Common myeloid progenitor, CD34-positive (primary cell): ENCODE measurements at regions of chr20 and their contacts with region 1.

Region 1: GRCh38 chr20:45322952-45323383 is 14.9 kb upstream of the MATN4 start:
- DNase-seq: peak; percentile 77 to 90 (median 89)
- H3K4me3 ChIP-seq: no peak overlapping the region
- H3K27ac ChIP-seq: no peak overlapping the region
- H3K4me1 ChIP-seq: peaks cover 2 to 29% (median 16%) of the 10 kb centered on the region in 4 experiments
- H3K27me3 ChIP-seq: peaks cover 0 to 2% (median 0%) of the 10 kb centered on the region in 5 experiments

Region 2: DNA sequence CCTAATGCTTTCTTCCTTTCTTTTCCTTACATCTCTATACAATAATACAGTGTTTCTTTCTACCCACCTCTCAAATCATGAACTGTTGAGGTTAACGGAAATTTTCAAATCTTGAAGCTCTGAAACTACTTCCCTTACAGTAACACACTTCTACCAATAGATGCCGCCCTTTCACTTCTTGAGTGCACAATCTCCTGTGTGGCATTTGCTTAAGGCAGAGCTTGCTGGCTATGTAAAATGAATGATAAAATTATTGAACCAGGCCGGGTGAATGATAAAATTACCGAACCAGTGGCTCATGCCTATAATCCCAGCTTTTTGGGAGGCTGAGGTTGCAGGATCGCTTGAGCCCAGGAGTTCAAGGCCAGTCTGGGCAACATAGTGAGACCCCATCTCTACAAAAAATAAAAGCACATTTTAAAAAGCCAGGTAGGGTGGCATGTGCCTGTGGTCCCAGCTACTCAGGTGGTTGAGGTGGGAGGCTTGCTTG is 278.8 kb before region 1 on chr20:
- CTCF ChIA-PET with region 1: interaction called, 10 read pairs
- POLR2A ChIA-PET with region 1: no interaction called
- DNase-seq: peak; percentile 74 to 86 (median 85)
- H3K4me3 ChIP-seq: no peak overlapping the region
- H3K27ac ChIP-seq: no peak overlapping the region
- H3K4me1 ChIP-seq: peaks cover 0 to 15% (median 7%) of the 10 kb centered on the region in 4 experiments
- H3K27me3 ChIP-seq: no peaks in the 10 kb centered on the region

Region 3: DNA sequence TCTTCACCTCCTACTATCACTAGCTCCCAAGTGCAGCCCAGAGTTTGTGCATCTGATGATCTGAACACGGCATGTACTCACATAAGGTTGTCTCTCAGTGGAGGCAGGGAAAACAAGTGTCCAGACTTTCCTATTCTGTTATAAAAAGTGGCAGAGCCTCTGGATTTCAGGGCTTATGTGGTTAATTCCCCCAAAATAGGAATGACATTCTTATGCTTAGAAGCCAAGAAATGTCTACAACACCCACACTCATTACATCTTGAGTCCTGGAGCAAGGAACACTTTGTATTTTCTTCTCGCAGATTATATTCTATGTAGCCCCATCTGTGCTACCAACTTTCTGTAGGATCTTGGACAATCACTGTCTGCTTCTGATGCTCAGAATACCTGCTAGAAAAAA is 129.6 kb before region 1 on chr20:
- CTCF ChIA-PET with region 1: no interaction called
- POLR2A ChIA-PET with region 1: no interaction called
- DNase-seq: no peak
- H3K4me3 ChIP-seq: no peak overlapping the region
- H3K27ac ChIP-seq: no peak overlapping the region
- H3K4me1 ChIP-seq: no peaks in the 10 kb centered on the region
- H3K27me3 ChIP-seq: peaks cover 0 to 11% (median 2%) of the 10 kb centered on the region in 5 experiments

Region 4: DNA sequence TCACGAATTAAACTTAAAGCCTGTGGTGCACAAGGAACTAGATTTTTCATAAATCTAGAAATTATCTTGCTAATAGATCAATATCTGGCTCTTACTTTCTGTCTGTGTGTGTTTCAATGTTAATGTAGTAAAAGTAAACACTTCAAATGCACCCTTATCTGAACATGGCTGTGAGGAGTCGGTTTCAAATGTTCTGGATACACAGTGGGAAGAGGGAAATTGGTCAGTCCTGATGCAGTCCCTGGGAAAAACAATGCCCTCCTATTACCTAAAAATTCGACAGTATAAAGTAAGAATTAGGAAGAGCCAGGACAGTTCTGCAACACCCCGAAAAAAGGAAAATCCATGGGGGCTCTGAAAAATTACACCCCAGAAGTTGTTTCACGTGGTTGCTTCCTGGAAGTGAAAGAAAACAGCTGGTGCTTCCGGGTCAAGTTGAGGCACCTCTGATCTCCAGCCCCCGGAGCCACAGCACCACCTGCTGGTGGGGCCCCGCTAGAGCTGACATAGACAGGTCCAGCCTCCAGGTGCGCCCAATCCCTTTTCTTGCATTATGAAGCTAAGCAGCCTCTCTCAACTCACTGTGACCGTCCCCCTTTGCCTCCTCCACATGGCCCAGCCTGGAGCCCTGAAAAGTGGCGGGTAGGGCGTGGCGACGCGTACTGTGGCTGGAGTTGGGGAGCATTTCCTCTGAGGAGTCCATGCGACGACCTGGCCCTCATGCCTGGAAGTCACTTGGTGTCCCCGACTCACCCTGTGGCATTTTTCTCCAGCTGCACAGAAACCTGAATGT is 93.5 kb before region 1 on chr20:
- CTCF ChIA-PET with region 1: no interaction called
- POLR2A ChIA-PET with region 1: no interaction called
- DNase-seq: peak; percentile 14 to 37 (median 27)
- H3K4me3 ChIP-seq: no peak overlapping the region
- H3K27ac ChIP-seq: no peak overlapping the region
- H3K4me1 ChIP-seq: no peaks in the 10 kb centered on the region
- H3K27me3 ChIP-seq: peaks cover 4 to 27% (median 14%) of the 10 kb centered on the region in 5 experiments

Region 5: GRCh38 chr20:45337367-45338120 is 14.6 kb after region 1 on chr20:
- CTCF ChIA-PET with region 1: interaction called, 10 read pairs
- POLR2A ChIA-PET with region 1: no interaction called
- DNase-seq: no peak
- H3K4me3 ChIP-seq: no peak overlapping the region
- H3K27ac ChIP-seq: no peak overlapping the region
- H3K4me1 ChIP-seq: peaks cover 0 to 7% (median 0%) of the 10 kb centered on the region in 4 experiments
- H3K27me3 ChIP-seq: no peaks in the 10 kb centered on the region

Region 6: DNA sequence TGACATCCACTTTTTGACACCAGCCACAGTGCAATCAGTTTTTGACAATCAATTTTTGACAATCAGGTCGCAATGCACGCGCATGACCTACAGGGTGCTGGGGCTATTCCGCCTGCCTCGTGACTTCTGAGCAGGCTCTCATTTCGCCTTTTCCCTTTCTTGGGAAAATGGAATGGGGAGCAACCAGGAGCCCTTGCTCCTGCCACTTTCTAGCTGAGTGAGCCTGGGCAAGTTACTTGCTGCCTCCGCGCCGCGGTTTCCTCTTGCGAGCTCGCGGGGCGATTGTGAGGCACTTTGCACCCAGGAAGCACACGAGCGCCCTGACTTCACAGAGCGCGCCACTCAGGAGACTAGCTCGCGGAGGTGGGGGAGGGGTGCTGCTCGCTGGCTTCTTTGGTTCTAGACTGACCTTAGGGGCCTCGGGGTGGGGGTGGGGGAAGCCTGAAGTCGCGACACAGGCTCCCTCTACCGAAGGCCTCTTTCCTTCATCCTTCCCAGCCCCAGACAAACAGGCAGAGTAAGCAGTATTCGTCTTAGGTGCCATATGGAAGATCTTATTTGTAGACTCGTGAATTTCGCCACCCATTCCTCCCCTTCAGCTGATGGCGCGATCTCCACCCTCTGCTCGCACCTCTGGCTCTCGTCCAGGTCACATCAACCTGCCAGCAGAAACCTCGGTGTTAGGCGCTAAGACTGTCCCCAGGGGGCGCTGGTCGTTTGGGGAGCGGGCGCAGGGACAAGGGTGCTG is 50.6 kb after region 1 on chr20:
- CTCF ChIA-PET with region 1: interaction called, 53 read pairs
- POLR2A ChIA-PET with region 1: no interaction called
- DNase-seq: peak; percentile 87 to 90 (median 89)
- H3K4me3 ChIP-seq: peak overlapping the region; percentile 34 to 88 (median 63)
- H3K27ac ChIP-seq: no peak overlapping the region
- H3K4me1 ChIP-seq: peaks cover 3 to 14% (median 12%) of the 10 kb centered on the region in 4 experiments
- H3K27me3 ChIP-seq: no peaks in the 10 kb centered on the region

Region 7: DNA sequence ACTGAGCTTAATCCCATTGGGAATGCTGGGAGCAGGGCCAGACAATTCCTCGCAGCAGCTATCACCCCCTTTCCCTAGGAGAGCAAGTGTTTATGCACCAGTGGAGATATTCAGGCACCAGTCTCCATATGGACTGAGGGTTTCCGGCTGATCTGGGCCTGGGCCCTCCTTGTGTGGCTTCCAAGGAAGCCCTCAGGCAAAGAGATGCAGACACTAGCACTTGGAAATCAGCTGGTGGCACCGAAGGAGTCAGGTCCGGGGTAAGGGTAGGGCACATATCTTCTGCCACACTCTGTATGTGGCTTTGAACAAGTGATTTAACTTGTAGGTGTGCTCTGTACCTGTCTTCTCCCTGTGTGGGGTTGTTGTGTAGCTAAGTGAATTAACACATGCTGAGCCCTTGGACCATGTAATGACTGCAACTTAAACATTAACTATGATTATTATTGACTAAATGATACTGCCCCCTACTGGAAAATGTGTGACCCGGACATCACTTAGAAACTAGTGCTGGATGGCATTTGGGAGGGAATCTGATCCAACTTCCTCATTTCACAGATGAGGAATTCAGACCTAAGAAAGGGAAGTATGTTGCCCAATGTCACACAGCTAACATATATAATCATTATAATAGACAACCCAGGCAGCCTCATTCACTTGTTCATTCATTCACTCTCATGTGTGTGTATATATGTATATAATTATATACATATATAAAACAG is 127.3 kb after region 1 on chr20:
- CTCF ChIA-PET with region 1: interaction called, 88 read pairs
- POLR2A ChIA-PET with region 1: no interaction called
- DNase-seq: peak; percentile 86 to 93 (median 92)
- H3K4me3 ChIP-seq: no peak overlapping the region
- H3K27ac ChIP-seq: no peak overlapping the region
- H3K4me1 ChIP-seq: no peaks in the 10 kb centered on the region
- H3K27me3 ChIP-seq: no peaks in the 10 kb centered on the region

Region 8: DNA sequence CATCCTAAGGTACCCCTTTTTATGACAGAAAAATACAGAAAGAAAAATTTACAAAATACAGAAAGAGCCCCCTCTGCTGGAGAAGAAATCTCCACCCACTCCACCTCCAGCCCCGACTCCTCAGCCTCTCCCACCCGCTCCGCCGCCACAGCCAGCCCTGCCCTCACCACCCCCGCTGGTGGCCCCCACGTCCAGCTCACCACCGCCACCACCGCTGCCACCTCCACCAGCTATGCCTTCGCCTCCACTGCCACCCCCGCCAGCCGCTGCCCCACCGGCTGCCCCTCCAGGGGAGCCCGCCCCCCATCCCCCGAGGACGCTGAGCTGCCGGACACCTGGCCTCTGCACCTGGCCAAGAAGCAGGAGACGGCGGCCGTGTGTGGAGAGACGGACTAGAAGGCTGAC is 164.3 kb after region 1 on chr20:
- CTCF ChIA-PET with region 1: interaction called, 27 read pairs
- POLR2A ChIA-PET with region 1: interaction called, 3 read pairs
- DNase-seq: peak; percentile 14 to 48 (median 38)
- H3K4me3 ChIP-seq: no peak overlapping the region
- H3K27ac ChIP-seq: no peak overlapping the region
- H3K4me1 ChIP-seq: no peaks in the 10 kb centered on the region
- H3K27me3 ChIP-seq: peaks cover 3 to 11% (median 8%) of the 10 kb centered on the region in 5 experiments

Region 9: GRCh38 chr20:45704969-45705637 is 382.1 kb after region 1 on chr20 and contains the start of gene WFDC10B:
- CTCF ChIA-PET with region 1: no interaction called
- POLR2A ChIA-PET with region 1: no interaction called
- DNase-seq: peak in 1 of 3 donors; percentile 1
- H3K4me3 ChIP-seq: no peak within 1 kb of the TSS
- H3K27ac ChIP-seq: no peak within 1 kb of the TSS
- H3K4me1 ChIP-seq: no peaks in the 10 kb centered on the region
- H3K27me3 ChIP-seq: peaks cover 0 to 2% (median 0%) of the 10 kb centered on the region in 5 experiments